ENCODE measurements at regions of chr7 and their contacts with region 1.

Region 1: DNA sequence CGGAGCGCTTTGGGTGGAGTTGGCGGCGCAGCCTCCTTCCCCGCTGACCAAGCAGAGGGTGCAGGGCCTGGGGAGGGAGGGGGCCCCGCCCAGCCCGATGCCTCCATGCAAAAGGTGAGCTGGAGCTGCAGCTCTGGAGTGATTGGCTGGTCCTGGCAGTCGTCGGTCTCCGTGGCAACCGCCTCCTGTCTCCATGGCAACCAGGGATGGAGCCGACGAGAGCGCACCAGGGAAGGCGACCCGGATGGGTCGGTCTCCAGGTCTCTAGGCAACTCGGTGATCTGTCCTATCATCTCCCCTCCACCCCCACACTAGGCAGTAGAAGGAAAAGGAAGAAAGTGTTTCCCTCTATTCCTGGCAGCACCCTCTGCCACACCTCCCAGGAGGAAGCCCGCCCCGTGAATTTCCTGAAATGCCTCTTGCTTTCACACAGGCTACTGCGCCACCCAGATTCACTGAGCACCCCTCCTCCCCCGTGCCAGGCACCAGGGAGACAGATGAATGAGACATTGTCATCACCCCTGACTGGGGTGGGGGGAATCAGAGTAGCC is 647 bp upstream of the NACAD start:
- DNase-seq: peak in 1 of 2 donors; percentile 33
- H3K4me3 ChIP-seq: peak overlapping the region; percentile 52 to 83 (median 62)
- H3K27ac ChIP-seq: peak overlapping the region; percentile 60 to 85
- H3K4me1 ChIP-seq: no peaks in the 10 kb centered on the region
- H3K27me3 ChIP-seq: no peaks in the 10 kb centered on the region
- CTCF ChIP-seq: no peak
- POLR2A ChIP-seq: no peak

Region 2: DNA sequence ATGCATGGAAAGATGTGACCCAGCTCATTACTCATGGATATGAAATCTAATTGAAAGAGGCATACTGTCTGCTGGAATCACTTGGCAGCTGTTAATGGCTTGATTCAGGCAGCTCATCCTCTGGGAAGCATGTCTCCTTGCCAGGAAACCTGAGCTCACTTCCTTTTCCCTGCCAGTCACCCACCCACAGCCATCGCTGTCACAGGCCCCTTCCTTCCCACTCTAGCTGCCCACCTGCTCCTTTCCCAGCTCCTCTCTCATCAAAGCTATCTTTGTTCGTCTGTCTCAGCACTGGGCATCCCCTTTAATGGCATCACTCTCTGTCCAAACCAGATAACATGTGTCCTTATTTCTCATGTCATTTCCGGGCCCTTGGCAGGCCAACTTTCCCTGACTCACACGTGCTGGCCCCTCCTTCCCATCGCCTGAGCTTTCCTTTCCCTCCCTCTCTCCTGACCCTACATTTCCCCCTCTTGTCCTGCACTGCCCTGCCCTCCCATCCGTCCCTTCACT is 1770.6 kb after region 1 on chr7:
- intact Hi-C with region 1: loop called (anchors 10 kb)
- DNase-seq: no peak
- H3K4me3 ChIP-seq: no peak overlapping the region
- H3K27ac ChIP-seq: no peak overlapping the region
- H3K4me1 ChIP-seq: no peaks in the 10 kb centered on the region
- H3K27me3 ChIP-seq: no peaks in the 10 kb centered on the region
- CTCF ChIP-seq: no peak
- POLR2A ChIP-seq: no peak